ENCODE measurements at regions of chr5 and their contacts with region 1.

Region 1: GRCh38 chr5:180784497-180785097 is 18.0 kb downstream of the MGAT1 start:
- DNase-seq: peak; percentile 85
- H3K4me3 Mint-ChIP-seq: no peak overlapping the region
- H3K27ac Mint-ChIP-seq: no peak overlapping the region
- H3K4me1 Mint-ChIP-seq: peaks cover 16% of the 10 kb centered on the region
- H3K27me3 Mint-ChIP-seq: no peaks in the 10 kb centered on the region
- CTCF ChIP-seq: peak; percentile 68

Region 2: GRCh38 chr5:180802325-180803180 is 18.0 kb after region 1 on chr5 and contains the start of gene MGAT1:
- CTCF ChIA-PET with region 1: interaction called, 19 read pairs
- intact Hi-C with region 1: loop called (anchors 1 kb)
- DNase-seq: peak; percentile 94
- H3K4me3 Mint-ChIP-seq: peak within 1 kb of the TSS; percentile 79
- H3K27ac Mint-ChIP-seq: peak within 1 kb of the TSS; percentile 82
- H3K4me1 Mint-ChIP-seq: peaks cover 66% of the 10 kb centered on the region
- H3K27me3 Mint-ChIP-seq: no peaks in the 10 kb centered on the region
- CTCF ChIP-seq: no peak
- total RNA-seq, gene MGAT1: 77.5 and 86.4 TPM in 2 replicates

Region 3: GRCh38 chr5:180860887-180861822 is 76.6 kb after region 1 on chr5 and contains the start of gene ZFP62:
- CTCF ChIA-PET with region 1: no interaction called
- intact Hi-C with region 1: loop called (anchors 2 kb)
- DNase-seq: peak; percentile 95
- H3K4me3 Mint-ChIP-seq: peak within 1 kb of the TSS; percentile 90
- H3K27ac Mint-ChIP-seq: peak within 1 kb of the TSS; percentile 83
- H3K4me1 Mint-ChIP-seq: peaks cover 26% of the 10 kb centered on the region
- H3K27me3 Mint-ChIP-seq: no peaks in the 10 kb centered on the region
- CTCF ChIP-seq: no peak
- total RNA-seq, gene ZFP62: 43.5 and 46.4 TPM in 2 replicates

Region 4: DNA sequence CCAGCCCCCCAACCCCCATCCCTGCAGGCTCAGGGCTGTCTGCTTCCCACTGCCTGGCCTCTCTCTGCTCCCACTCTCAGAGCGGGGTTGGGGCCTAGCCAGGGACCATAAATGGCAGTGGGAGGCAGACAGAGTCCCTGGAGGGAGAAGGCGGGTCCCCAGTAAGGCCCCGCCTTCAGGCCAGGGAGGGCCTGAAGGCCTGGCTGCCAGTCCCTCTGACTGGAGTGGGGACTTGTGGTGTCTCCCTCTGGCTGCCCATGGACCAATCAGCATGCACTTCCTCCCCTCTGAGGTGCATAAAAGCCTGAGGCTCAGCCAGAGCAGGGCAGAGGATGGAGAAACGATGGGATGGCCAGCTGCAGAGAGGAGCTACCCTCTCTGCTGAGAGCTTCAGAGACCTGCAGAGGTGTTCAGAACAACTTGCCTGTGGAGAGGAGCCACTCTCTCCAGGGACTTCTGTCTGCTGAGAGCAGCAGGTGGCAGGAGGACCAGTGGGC is 252.8 kb after region 1 on chr5:
- CTCF ChIA-PET with region 1: interaction called, 3 read pairs
- intact Hi-C with region 1: loop called (anchors 10 kb)
- DNase-seq: no peak
- H3K4me3 Mint-ChIP-seq: no peak overlapping the region
- H3K27ac Mint-ChIP-seq: no peak overlapping the region
- H3K4me1 Mint-ChIP-seq: peaks cover 8% of the 10 kb centered on the region
- H3K27me3 Mint-ChIP-seq: no peaks in the 10 kb centered on the region
- CTCF ChIP-seq: no peak

Region 5: DNA sequence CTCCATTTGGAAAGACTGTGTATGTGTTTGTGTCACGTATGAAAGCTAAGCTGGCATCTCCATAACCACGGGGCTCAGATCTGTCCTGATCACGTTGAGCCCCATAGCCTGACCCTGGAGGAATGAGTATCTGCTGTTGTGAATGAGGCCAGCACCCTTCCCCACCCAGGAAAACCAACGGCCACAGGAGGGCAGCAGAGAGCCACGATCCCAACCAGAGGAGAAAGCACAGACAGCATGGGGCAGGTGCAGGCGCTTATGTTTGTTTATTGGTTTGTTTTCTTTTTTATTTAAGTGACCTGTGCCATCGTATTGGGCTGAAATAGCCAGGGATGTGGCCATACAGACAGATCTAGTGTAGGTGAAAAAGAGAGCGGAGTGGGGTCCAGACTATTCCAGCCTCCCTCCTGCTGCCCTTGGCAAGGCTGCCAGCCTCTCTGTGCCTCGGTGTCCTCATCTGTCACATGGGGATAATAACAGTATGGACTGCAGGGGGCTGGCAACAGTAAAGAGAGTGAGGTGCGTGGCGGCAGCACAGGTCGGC is 374.8 kb after region 1 on chr5:
- CTCF ChIA-PET with region 1: no interaction called
- intact Hi-C with region 1: loop called (anchors 5 kb)
- DNase-seq: peak; percentile 95
- H3K4me3 Mint-ChIP-seq: no peak overlapping the region
- H3K27ac Mint-ChIP-seq: peak overlapping the region; percentile 46
- H3K4me1 Mint-ChIP-seq: peaks cover 14% of the 10 kb centered on the region
- H3K27me3 Mint-ChIP-seq: peaks cover 32% of the 10 kb centered on the region
- CTCF ChIP-seq: peak; percentile 62